Astrocyte of the cerebellum (primary cell): ENCODE measurements at regions of chr7 and their contacts with region 1.

Region 1: GRCh38 chr7:129684777-129685176 is 73.3 kb downstream of the NRF1 start:
- DNase-seq: no peak
- H3K4me3 ChIP-seq: no peak overlapping the region
- CTCF ChIP-seq: no peak

Region 2: DNA sequence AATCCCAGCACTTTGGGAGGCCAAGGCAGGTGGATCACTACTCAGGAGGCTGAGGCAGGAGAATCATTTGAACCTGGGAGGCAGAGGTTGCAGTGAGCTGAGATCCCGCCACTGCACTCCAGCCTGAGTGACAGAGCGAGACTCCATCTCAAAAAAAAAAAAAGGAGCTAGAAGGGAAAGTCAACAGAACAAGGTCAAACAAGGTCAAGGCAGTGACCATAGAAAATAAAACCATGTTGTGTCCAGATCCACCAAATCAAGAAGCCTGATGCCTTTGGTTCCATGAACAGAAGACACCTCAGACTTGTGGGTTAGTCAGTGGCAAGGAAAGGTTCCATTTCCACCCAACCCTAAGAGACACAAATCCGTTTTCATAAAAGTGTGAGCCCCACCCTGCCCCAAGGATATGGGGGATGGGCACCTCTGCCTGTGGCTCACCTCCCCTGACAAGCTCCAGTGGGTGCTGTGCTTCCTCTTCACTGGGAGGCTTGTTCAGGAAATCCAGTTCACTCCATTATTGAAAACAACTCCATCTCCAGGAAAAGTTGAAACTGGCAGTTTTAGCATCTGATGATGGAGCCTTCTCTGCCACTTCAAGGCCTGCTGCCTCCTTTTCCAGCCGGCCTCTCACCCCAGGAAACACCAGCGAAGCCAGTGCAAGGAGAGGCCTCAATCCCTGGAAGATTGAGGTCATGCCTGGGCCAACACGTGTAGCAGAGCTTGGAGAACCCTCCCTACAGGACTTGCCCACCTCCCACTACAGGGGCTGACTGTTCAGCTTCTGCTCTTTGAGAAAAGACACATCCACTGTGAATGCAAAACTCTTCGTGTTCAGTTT is 79.7 kb after region 1 on chr7:
- in situ Hi-C with region 1: loop called (anchors 5 kb)
- DNase-seq: no peak
- H3K4me3 ChIP-seq: no peak overlapping the region
- CTCF ChIP-seq: no peak

Region 3: DNA sequence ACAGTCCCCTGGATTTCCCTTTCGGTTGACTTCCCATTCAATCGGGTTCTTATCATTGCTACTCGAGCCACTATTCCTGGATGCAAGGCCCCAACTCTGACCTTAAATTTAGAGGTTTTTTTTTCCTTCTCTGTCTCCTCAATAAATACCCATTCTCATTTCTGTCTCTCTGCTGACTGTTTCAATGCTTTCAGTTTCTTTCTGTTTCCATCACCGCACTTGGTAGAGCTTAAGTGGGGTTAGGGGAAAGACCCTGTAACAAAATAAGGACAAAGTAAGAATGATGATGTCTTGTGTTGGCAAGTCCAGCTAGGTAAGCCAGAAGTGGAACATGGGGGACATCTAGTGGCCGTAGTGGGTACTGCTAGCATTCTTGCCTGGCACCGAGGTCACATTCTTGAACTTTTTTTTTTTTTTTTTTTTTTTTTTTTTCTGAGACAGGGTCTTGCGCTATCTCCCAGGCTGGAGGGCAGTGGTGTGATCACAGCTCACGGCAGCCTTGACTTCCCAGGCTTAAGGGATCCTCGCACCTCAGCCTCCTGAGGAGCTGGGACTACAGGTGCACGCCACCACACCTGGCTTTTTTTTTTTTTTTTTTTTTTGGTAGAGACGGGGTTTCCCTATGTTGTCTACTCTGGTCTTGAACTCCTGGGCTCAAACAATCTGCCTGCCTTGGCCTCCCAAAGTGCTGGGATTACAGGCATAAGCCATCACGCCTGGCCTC is 326.1 kb after region 1 on chr7:
- in situ Hi-C with region 1: loop called (anchors 25 kb)
- DNase-seq: peak; percentile 87
- H3K4me3 ChIP-seq: no peak overlapping the region
- CTCF ChIP-seq: peak; percentile 91